SK-N-SH (cell line): ENCODE measurements at regions of chr13 and their contacts with region 1.

Region 1: GRCh38 chr13:20197361-20197834 is 4.7 kb upstream of the GJB2 start:
- DNase-seq: peak; percentile 59
- H3K4me3 ChIP-seq: no peak overlapping the region
- H3K27ac ChIP-seq: no peak overlapping the region
- H3K4me1 ChIP-seq: peaks cover 0 to 11% of the 10 kb centered on the region in 2 experiments; a peak in 1 of 4 replicates
- H3K27me3 ChIP-seq: peaks cover 59% of the 10 kb centered on the region
- CTCF ChIP-seq: peak; percentile 67
- EP300 ChIP-seq: no peak
- RAD21 ChIP-seq: peak; percentile 64

Region 2: GRCh38 chr13:20090349-20090748 is 107.0 kb before region 1 on chr13:
- CTCF ChIA-PET with region 1: no interaction called
- POLR2A ChIA-PET with region 1: no interaction called
- DNase-seq: no peak
- H3K4me3 ChIP-seq: no peak overlapping the region
- H3K27ac ChIP-seq: no peak overlapping the region
- H3K4me1 ChIP-seq: no peaks in the 10 kb centered on the region
- H3K27me3 ChIP-seq: no peaks in the 10 kb centered on the region
- CTCF ChIP-seq: peak; percentile 33; the same call in 1 of the 2 replicates
- EP300 ChIP-seq: no peak
- RAD21 ChIP-seq: 0 out of 2 replicates have a peak, but pooled peaks have one; percentile 26

Region 3: DNA sequence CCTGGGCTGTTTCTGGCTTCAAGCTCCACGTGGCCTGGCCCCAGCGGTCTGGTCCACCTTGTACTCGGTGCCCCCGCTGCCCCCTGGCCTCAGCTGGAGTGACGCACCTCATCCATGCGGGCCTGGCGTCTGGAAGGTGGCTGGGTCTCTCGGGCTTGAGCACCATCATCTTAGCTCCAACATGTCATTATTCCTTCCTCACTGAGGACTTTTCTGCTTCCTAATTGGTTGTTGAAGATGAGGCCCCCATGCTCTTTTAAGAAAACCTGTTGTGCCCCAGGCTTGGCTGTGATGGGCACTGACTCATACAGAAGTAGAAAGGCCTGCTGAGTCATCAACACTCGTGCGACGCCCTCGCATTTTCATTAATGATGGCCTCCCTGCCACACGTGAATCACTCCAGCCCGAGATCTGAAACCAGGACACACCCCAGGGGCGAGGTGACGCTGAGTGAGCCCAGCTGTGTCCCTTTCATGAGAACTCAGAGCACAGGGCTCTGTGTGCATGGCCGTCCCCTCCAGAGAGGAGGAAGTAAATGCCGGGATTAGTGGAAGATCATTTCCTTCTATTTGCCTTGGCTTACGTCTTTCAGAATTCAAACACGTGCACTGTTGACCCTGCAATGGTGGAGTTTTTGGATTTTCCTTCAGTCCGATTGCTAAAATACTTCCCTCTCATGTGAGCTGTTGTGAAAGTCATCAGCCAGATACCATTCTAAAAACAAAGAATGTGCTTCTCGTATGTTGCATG is 22.6 kb before region 1 on chr13:
- CTCF ChIA-PET with region 1: interaction called, 89 read pairs
- POLR2A ChIA-PET with region 1: no interaction called
- DNase-seq: no peak
- H3K4me3 ChIP-seq: no peak overlapping the region
- H3K27ac ChIP-seq: no peak overlapping the region
- H3K4me1 ChIP-seq: peaks cover 0 to 10% of the 10 kb centered on the region in 2 experiments; a peak in 2 of 4 replicates
- H3K27me3 ChIP-seq: peaks cover 96% of the 10 kb centered on the region
- CTCF ChIP-seq: no peak
- EP300 ChIP-seq: no peak
- RAD21 ChIP-seq: no peak

Region 4: DNA sequence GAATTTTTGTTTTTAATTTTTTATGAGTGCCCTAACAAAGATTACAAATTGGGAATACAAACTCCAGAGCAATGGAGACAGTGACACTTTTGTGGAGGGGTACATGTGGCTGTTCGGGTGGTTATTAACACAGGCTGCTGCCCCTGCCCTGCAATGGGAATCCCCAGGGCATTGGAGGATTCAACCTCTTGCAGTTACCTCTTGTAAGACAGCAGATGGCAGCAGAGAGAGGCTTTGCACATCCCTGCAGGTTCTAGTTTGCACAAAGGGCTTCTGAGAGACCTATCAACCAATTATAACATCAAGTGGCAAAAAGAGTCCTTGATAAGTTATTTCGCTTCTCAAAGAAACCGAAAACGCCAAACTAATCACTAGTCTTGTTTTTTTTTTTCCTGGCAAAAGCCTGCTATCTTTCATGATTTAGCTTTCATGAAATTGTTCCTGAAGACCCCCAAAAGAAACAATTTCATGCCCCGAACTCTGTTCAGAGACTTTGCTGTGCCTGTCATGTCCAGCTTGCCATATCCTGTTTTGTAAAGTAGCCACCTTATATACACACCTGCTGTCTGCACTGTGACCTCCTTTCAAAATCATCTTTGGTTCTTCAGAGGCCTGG is 15.1 kb before region 1 on chr13:
- CTCF ChIA-PET with region 1: interaction called, 89 read pairs
- POLR2A ChIA-PET with region 1: no interaction called
- DNase-seq: peak; percentile 84
- H3K4me3 ChIP-seq: no peak overlapping the region
- H3K27ac ChIP-seq: no peak overlapping the region
- H3K4me1 ChIP-seq: no peaks in the 10 kb centered on the region; a peak in 1 of 4 replicates
- H3K27me3 ChIP-seq: peaks cover 84% of the 10 kb centered on the region
- CTCF ChIP-seq: peak; percentile 82
- EP300 ChIP-seq: no peak
- RAD21 ChIP-seq: peak; percentile 73

Region 5: DNA sequence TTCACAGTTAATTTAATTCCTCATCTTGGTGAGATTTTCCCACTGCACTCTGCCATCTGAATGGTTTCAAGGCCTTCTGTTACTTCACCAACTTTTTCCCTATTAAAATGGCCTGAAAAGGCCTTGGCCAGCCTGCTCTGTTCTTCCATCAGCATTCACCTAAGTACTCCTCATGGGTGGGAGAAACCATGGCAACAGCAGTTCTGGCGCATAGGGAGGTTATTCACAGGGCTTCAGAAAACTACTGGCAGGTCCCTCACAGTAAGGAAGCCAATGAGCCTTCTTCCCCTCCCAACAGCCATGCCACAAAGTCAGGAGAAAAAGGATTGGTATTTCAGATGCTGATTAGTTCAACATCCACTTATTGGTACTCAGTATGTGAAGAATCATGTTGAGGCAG is 12.6 kb after region 1 on chr13:
- CTCF ChIA-PET with region 1: interaction called, 11 read pairs
- POLR2A ChIA-PET with region 1: no interaction called
- DNase-seq: no peak
- H3K4me3 ChIP-seq: no peak overlapping the region
- H3K27ac ChIP-seq: no peak overlapping the region
- H3K4me1 ChIP-seq: no peaks in the 10 kb centered on the region
- H3K27me3 ChIP-seq: peaks cover 73% of the 10 kb centered on the region
- CTCF ChIP-seq: no peak
- EP300 ChIP-seq: no peak
- RAD21 ChIP-seq: no peak